HEK293 (cell line): ENCODE measurements at regions of chr9 and their contacts with region 1.

Region 1: GRCh38 chr9:113410207-113410864 is at the starts of genes C9orf43 and POLE3:
- H3K4me3 ChIP-seq: peak within 1 kb of the TSS; percentile 62
- H3K27ac ChIP-seq: peak within 1 kb of the TSS; percentile 67
- H3K4me1 ChIP-seq: peaks cover 6% of the 10 kb centered on the region; the same call in 1 of the 2 replicates
- CTCF ChIP-seq: no peak

Region 2: GRCh38 chr9:113221003-113221799 is 189.1 kb before region 1 on chr9 and contains the starts of genes FKBP15 and SLC31A1:
- CTCF ChIA-PET with region 1: no interaction called
- POLR2A ChIA-PET with region 1: interaction called, 21 read pairs
- H3K4me3 ChIP-seq: peak within 1 kb of the TSS; percentile 80
- H3K27ac ChIP-seq: peak within 1 kb of the TSS; percentile 48
- H3K4me1 ChIP-seq: 0 out of 2 replicates have a peak, but pooled peaks cover 3% of the 10 kb centered on the region
- CTCF ChIP-seq: no peak

Region 3: GRCh38 chr9:113331780-113332179 is 78.6 kb before region 1 on chr9:
- CTCF ChIA-PET with region 1: no interaction called
- POLR2A ChIA-PET with region 1: interaction called, 10 read pairs
- H3K4me3 ChIP-seq: no peak overlapping the region
- H3K27ac ChIP-seq: no peak overlapping the region
- H3K4me1 ChIP-seq: no peaks in the 10 kb centered on the region
- CTCF ChIP-seq: no peak

Region 4: GRCh38 chr9:113340017-113340699 is 70.2 kb before region 1 on chr9 and contains the start of gene WDR31:
- CTCF ChIA-PET with region 1: interaction called, 7 read pairs
- POLR2A ChIA-PET with region 1: interaction called, 20 read pairs
- H3K4me3 ChIP-seq: peak within 1 kb of the TSS; percentile 82
- H3K27ac ChIP-seq: peak within 1 kb of the TSS; percentile 57
- H3K4me1 ChIP-seq: 0 out of 2 replicates have a peak, but pooled peaks cover 4% of the 10 kb centered on the region
- CTCF ChIP-seq: 0 out of 2 replicates have a peak, but pooled peaks have one; percentile 18

Region 5: DNA sequence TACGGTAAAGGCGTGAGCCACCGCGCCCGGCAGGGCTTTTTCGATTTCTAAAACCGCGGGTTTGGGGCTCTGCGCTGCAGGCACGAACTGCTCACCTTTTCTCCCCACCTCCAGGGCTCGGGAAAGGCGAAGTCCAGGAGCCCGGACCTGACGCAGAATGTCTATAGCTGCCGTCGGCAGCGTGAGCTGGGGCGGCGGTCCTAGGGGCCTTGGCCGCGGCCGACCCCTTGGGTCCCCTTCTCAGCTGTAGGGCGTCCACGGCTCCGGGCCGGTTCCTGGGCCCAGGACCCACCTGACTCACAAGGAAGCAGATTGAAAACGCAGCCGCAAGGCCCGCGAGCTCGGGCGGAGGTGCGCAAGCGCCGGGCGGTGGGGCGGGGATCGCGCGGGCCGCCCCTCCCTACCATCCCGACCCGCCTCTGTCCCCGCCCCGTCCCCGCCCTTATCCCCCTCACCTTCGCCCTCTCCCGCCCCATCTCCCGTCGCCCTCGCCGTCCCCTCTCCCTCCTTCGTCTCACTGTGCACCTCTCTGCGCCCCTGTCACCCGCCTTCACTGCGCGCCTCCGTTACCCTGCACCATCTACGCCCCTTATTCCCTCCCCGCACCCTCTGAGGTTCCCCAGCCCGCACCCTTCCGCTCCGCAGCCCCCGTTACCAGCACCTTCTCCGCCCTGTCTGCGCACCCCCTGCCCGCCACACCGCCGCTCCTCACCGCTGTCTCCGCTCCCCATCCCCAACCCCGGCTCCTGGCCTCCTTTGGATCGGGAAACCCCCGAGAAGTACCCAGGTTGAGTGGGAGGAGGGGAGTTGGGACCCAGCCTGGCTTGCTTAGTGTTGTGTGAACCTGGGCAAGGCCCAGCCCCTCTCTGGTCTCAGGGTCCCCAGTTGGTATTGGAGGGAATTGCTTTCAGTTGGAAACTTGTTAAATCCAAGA is 33.4 kb before region 1 on chr9 and contains the start of gene HDHD3:
- CTCF ChIA-PET with region 1: no interaction called
- POLR2A ChIA-PET with region 1: interaction called, 10 read pairs
- H3K4me3 ChIP-seq: peak within 1 kb of the TSS; percentile 64
- H3K27ac ChIP-seq: peak within 1 kb of the TSS; percentile 81
- H3K4me1 ChIP-seq: peaks cover 3% of the 10 kb centered on the region; the same call in 1 of the 2 replicates
- CTCF ChIP-seq: no peak

Region 6: GRCh38 chr9:113446323-113446740 is 36.0 kb after region 1 on chr9:
- CTCF ChIA-PET with region 1: interaction called, 11 read pairs
- POLR2A ChIA-PET with region 1: interaction called, 5 read pairs
- H3K4me3 ChIP-seq: no peak overlapping the region
- H3K27ac ChIP-seq: no peak overlapping the region
- H3K4me1 ChIP-seq: no peaks in the 10 kb centered on the region
- CTCF ChIP-seq: no peak